ENCODE measurements at regions of chr9 and their contacts with region 1.

Region 1: DNA sequence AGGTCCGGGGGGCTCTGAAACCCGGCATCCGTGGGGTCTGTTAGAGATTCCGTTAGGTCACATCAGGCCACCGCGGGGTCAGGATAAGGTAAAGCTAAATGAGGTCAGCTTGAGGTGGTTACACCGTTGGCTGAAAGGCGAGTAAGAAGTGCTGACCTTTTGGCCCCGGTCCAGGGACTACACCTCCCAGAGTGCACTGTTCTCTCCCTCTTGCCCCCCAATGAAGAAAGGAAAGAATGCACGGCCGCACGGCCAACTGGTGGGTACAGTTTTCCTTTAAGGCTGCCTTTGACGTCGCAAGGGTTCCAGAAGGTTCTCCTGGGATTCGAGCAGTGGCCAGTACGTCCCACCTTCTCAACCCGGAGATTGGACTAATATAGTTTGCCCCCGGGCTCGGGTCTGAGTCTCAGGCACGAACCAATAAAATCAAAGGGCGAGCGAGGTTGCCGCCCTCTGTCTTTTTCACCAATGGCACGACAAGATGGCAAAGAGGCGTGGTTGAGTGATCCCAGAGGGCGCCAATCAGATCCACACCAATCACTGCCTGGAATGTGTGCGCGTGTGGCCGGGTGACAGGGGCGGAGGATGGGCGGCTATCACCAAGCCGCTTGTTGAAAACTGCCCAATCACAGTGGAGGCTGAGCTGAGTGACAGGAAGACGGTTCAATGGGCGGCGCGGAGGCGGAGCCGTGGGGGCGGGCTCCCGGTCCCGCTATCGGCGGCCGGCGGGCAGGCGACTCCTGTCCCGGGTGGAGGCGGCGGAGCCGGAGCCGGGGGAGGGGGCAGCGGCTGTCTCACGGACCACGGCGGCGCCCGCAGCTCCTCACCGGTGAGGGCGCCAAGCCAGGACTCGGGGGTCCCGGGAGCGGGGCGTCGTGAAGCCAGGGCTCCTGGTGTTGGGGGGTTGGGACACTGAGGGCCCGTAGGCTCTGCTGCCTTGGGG is at the start of gene DNAJB5:
- DNase-seq: peak; percentile 97
- ATAC-seq: peak; percentile 95
- H3K4me3 ChIP-seq: peak within 1 kb of the TSS; percentile 71 to 78 (median 75)
- H3K27ac ChIP-seq: no peak within 1 kb of the TSS
- H3K4me1 ChIP-seq: peaks cover 10% of the 10 kb centered on the region; the same call in 1 of the 2 replicates
- H3K27me3 ChIP-seq: no peaks in the 10 kb centered on the region; a peak in 2 of 5 replicates
- CTCF ChIP-seq: no peak
- EP300 ChIP-seq: no peak
- POLR2A ChIP-seq: peak in 1 of 2 experiments; percentile 46; a peak in 1 of 4 replicates
- RAD21 ChIP-seq: 0 out of 2 replicates have a peak, but pooled peaks have one; percentile 16
- total RNA-seq, gene DNAJB5: 0.69 and 0.90 TPM in 2 replicates

Region 2: GRCh38 chr9:34891386-34891785 is 97.9 kb before region 1 on chr9:
- CTCF ChIA-PET with region 1: interaction called, 4 read pairs
- POLR2A ChIA-PET with region 1: no interaction called
- in situ Hi-C with region 1: loop called (anchors 5 kb)
- intact Hi-C with region 1: no loop called
- DNase-seq: no peak
- ATAC-seq: no peak
- H3K4me3 ChIP-seq: no peak overlapping the region
- H3K27ac ChIP-seq: no peak overlapping the region
- H3K4me1 ChIP-seq: no peaks in the 10 kb centered on the region
- H3K27me3 ChIP-seq: peaks cover 0 to 12% of the 10 kb centered on the region in 2 experiments; a peak in 1 of 5 replicates
- CTCF ChIP-seq: no peak
- EP300 ChIP-seq: no peak
- POLR2A ChIP-seq: no peak
- RAD21 ChIP-seq: no peak

Region 3: GRCh38 chr9:35002623-35003022 is 13.3 kb after region 1 on chr9:
- CTCF ChIA-PET with region 1: no interaction called
- POLR2A ChIA-PET with region 1: no interaction called
- in situ Hi-C with region 1: no loop called
- intact Hi-C with region 1: no loop called
- DNase-seq: no peak
- ATAC-seq: no peak
- H3K4me3 ChIP-seq: no peak overlapping the region
- H3K27ac ChIP-seq: no peak overlapping the region
- H3K4me1 ChIP-seq: peaks cover 6% of the 10 kb centered on the region
- H3K27me3 ChIP-seq: no peaks in the 10 kb centered on the region
- CTCF ChIP-seq: no peak
- EP300 ChIP-seq: no peak
- POLR2A ChIP-seq: no peak
- RAD21 ChIP-seq: no peak